H1 (cell line): ENCODE measurements at regions of chr19 and their contacts with region 1.

Region 1: DNA sequence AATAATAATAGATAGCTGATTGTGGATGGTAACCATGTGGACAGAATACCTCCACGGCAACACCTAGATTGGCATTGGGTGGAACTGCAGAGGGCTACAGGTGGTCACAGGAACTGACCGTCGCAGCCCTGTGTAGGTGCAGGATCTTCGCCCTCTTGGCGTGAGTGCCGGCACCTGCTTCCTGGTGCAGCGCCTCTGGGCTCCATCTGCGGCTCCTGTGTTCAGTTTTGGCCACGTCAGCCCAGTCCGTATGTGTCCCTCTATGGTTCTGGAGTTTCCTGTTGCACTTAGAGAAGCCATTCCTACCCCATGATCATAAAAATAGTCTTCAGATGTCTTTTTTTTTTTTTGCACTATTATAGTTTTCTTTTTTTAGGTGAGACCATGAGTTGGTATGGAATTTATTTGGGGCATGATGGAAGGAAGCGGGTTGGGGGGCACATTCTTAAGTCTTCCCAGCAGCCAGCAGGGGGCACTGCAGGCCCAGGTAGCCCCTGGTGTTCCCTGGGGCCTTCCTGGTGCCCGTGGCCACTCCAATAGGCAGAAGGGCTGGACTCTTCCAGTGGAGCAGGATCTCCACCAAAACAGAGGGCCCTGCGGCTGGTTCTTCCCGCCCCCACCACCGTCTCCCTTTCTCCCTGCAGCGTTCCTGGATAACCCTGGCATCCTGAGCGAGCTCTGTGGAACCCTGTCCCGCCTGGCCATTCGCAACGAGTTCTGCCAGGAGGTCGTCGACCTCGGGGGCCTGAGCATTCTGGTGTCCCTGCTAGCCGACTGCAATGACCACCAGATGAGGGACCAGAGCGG is 10.1 kb upstream of the SLC25A42 start:
- DNase-seq: peak; percentile 31 to 84
- H3K4me3 ChIP-seq: no peak overlapping the region
- H3K27ac ChIP-seq: no peak overlapping the region
- H3K4me1 ChIP-seq: no peaks in the 10 kb centered on the region
- H3K27me3 ChIP-seq: no peaks in the 10 kb centered on the region; a peak in 1 of 7 replicates
- CTCF ChIP-seq: peak; percentile 66 to 89 (median 89)
- EP300 ChIP-seq: no peak
- POLR2A ChIP-seq: no peak
- RAD21 ChIP-seq: peak; percentile 89 to 94

Region 2: GRCh38 chr19:19034204-19034624 is 19.5 kb before region 1 on chr19:
- CTCF ChIA-PET with region 1: interaction called, 18 read pairs
- POLR2A ChIA-PET with region 1: interaction called, 3 read pairs
- DNase-seq: peak; percentile 36 to 66
- H3K4me3 ChIP-seq: peak overlapping the region; percentile 80 to 98 (median 86)
- H3K27ac ChIP-seq: no peak overlapping the region
- H3K4me1 ChIP-seq: peaks cover 0 to 3% (median 3%) of the 10 kb centered on the region in 4 experiments; a peak in 3 of 7 replicates
- H3K27me3 ChIP-seq: no peaks in the 10 kb centered on the region
- CTCF ChIP-seq: no peak
- EP300 ChIP-seq: no peak
- POLR2A ChIP-seq: no peak
- RAD21 ChIP-seq: no peak

Region 3: DNA sequence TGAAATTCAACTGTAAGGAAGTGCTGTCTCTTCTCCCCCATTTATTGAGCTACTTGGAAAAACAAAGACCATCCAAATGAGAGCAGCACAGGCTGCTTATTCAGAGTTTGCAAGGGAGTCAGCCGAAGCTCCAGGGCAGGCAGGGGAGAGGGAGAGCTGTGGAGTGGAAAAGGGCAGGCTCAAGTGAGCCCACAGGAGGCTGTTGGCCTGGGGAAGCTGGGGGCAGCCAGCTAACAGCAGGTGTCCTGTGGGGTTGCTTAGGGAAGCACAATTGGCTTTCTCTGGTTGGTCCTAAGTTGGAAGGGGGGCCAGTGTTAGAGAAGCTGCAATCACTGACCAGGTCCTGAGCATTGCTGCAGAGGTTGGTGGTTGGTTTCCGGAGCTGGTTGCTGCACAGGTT is 34.0 kb after region 1 on chr19:
- CTCF ChIA-PET with region 1: interaction called, 18 read pairs
- POLR2A ChIA-PET with region 1: no interaction called
- DNase-seq: no peak
- H3K4me3 ChIP-seq: no peak overlapping the region
- H3K27ac ChIP-seq: no peak overlapping the region
- H3K4me1 ChIP-seq: peaks cover 9 to 15% (median 12%) of the 10 kb centered on the region in 4 experiments
- H3K27me3 ChIP-seq: peaks cover 0 to under 1% (median 0%) of the 10 kb centered on the region in 4 experiments; a peak in 1 of 7 replicates
- CTCF ChIP-seq: no peak
- EP300 ChIP-seq: no peak
- POLR2A ChIP-seq: no peak
- RAD21 ChIP-seq: no peak

Region 4: DNA sequence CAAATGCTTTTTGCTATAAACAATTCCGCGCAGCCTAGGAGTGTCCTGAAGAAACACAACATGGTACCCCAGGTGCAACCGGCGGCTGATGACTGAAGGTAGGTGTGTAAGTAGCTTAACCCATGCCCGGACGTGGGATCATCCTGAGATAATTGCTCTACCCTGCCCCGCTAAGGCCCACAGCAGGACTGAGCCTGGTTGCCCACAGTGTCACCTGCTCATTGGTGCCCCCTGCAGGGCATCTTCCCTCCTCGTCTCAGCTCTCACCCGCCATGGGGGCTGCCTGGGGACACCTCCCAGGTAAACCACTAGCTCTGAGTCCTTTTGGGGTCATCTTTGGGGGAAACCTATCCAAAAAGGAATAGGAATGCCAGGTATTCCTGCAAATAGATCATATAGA is 62.2 kb after region 1 on chr19:
- CTCF ChIA-PET with region 1: interaction called, 58 read pairs
- POLR2A ChIA-PET with region 1: interaction called, 4 read pairs
- DNase-seq: peak in 1 of 2 experiments; percentile 93
- H3K4me3 ChIP-seq: no peak overlapping the region
- H3K27ac ChIP-seq: no peak overlapping the region
- H3K4me1 ChIP-seq: peaks cover 3 to 12% (median 10%) of the 10 kb centered on the region in 4 experiments; a peak in 6 of 7 replicates
- H3K27me3 ChIP-seq: 0 out of 7 replicates have a peak, but pooled peaks cover 0 to 2% (median 0%) of the 10 kb centered on the region in 4 experiments
- CTCF ChIP-seq: peak; percentile 91 to 96 (median 95)
- EP300 ChIP-seq: no peak
- POLR2A ChIP-seq: no peak
- RAD21 ChIP-seq: peak; percentile 71 to 79

Region 5: GRCh38 chr19:19170053-19170872 is 116.6 kb after region 1 on chr19 and contains the start of gene MEF2B:
- CTCF ChIA-PET with region 1: interaction called, 21 read pairs
- POLR2A ChIA-PET with region 1: interaction called, 3 read pairs
- DNase-seq: peak; percentile 59 to 96
- H3K4me3 ChIP-seq: peak within 1 kb of the TSS; percentile 15 to 59 (median 28); a peak in 7 of 8 replicates
- H3K27ac ChIP-seq: no peak within 1 kb of the TSS
- H3K4me1 ChIP-seq: peaks cover 0 to 23% (median 11%) of the 10 kb centered on the region in 4 experiments; a peak in 6 of 7 replicates
- H3K27me3 ChIP-seq: peaks cover 2 to 16% (median 11%) of the 10 kb centered on the region in 4 experiments
- CTCF ChIP-seq: no peak
- EP300 ChIP-seq: no peak
- POLR2A ChIP-seq: peak in 1 of 2 experiments; percentile 34; a peak in 1 of 3 replicates
- RAD21 ChIP-seq: 0 out of 4 replicates have a peak, but pooled peaks of 1 of the 2 experiments have one; percentile 4
- total RNA-seq, gene MEF2B: 2.8 and 4.1 TPM in 2 replicates